ENCODE measurements at regions of chr16 and their contacts with region 1.

Region 1: DNA sequence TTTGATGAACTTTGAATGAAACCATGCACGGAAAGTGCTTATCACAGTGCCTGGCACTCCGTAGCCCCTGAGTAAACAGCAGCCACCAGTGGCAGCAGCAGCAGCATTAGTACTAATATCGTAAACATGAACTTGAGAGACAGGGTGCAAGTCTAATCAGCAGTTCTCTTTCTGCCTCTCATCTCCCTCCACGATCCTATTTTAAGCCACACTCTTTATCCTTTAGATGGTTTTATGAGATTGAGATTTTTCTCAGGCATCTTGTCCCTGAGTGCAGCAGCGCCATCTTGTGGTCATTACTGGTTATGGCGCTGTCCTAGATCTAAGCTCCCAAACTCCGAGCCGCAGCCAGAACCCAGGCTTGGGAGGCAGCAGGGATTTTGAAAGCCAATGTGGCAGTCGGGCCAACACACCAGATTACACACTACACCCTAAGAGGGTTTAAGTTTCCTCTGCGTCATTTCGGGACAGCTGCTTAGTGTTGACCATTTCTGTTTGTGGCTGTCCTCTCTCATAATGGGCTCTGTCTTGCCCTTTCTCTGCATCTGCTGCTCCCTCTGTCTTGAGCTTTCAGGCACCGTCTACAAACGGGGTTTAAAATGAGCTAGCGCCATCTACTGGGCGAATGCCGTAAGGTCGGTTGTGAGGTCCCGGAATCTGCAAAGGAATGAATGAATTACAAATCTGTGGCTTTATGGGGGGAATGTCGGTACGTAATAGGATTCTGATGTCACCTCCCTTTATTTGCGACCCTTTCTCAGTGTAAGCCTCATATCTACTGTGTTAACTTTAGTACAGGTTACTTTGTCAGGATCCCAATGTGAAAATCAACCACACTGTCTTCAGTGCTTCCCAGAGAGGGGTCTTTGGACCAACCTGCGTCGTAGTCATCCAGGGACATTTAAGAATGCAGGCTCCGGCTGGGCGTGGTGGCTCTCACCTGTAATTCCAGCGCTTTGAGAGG is 64.5 kb downstream of the CYLD start:
- DNase-seq: peak; percentile 90
- H3K4me3 ChIP-seq: peak overlapping the region in 3 of 4 donors; percentile 33 to 41 (median 40)
- H3K27ac ChIP-seq: peak overlapping the region; percentile 73 to 80 (median 76)
- H3K4me1 ChIP-seq: peaks cover 0 to 18% (median 7%) of the 10 kb centered on the region in 4 donors
- H3K27me3 ChIP-seq: no peaks in the 10 kb centered on the region
- CTCF ChIP-seq: peak; percentile 83 to 96 (median 92)
- EP300 ChIP-seq: no peak
- POLR2A ChIP-seq: no peak

Region 2: DNA sequence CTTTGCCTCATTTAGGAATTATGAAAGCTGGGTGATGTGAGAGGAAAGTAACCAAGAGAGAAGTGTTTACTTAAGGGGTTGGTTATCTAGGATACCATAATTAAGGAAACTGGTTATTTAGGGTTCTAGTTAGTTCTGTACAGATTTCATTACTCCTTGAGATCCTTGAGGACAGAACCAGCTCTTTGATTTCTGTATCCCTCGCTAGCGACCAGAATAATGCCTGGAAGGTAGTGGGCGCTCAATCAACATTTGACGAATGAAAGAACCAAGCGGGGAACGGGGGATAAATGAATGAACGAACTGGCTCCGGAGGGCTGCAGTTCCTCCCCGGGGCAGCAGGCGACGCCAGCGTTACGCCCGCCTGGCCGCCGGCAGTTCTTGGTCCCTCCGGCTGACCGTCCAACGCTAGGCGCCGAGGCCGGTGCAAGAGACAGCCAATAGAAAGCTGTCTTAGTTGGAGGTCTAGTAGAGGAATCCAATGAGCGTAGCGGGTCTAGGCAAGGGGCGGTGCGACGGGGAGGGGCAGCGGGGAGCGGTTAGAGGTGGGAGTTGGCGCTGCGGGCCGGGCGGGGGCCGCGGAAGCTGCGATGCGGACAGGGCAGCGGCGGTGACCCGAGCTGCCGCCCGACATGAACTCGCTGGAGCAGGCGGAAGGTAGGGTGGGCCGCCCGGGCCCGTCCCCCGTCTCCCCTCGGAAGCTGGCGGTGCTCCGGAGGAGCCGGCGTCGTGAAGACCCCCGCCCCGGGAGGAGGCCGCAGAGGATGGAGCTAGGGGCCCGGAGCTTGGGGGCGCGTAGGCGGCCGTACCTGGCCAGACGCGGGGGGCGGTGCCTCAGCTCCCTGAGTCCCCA is 781.5 kb before region 1 on chr16 and contains the start of gene CNEP1R1:
- intact Hi-C with region 1: loop called (anchors 5 kb)
- DNase-seq: peak; percentile 98
- H3K4me3 ChIP-seq: peak within 1 kb of the TSS; percentile 89 to 100 (median 100)
- H3K27ac ChIP-seq: peak within 1 kb of the TSS; percentile 84 to 91 (median 88)
- H3K4me1 ChIP-seq: peaks cover 0 to 35% (median 21%) of the 10 kb centered on the region in 4 donors
- H3K27me3 ChIP-seq: no peaks in the 10 kb centered on the region
- CTCF ChIP-seq: peak; percentile 99 to 100 (median 100)
- EP300 ChIP-seq: peak in 1 of 4 donors; percentile 44
- POLR2A ChIP-seq: peak; percentile 38 to 53
- total RNA-seq, gene CNEP1R1: 10.2 to 18.9 (median 14.1) TPM

Region 3: DNA sequence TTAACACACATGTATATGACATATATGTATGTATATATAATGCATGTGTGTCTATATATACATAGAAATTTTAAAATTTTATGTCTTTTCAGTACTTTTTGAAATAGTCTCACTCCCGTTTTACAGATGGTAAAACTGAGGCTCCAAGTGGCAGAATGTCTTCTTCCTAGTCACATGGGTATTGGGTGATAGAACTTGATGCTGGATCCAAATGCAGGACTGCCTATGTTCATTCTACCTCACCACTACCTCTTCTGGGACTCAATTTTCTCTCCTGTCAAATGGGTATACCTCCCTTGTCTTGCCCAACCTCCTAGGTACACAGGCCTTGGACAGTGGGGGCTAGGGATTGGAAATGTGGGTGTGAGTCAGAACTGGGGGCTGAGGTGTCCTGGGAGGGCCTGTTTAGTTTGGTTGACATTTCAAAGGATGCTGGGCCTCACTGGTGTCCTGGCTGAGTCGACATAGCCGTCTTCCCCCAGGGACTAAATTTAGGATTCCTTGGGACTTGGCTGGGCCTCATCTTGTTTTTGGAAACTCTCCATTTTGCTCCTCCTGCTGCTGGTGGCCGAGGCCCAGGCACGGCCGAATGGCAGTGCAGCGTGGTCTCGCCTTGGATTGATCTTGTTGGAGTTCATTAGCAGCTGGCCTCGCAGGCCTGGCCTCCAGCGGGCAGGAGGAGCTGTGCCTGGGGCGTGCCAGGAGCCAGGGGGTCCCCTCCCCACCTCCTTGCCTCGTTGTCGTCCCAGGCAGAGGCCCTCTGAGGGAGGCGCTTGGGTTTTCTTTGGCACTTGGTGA is 232.2 kb before region 1 on chr16:
- intact Hi-C with region 1: loop called (anchors 10 kb)
- DNase-seq: no peak
- H3K4me3 ChIP-seq: no peak overlapping the region
- H3K27ac ChIP-seq: peak overlapping the region; percentile 85 to 93 (median 88)
- H3K4me1 ChIP-seq: peaks cover 0 to 43% (median 38%) of the 10 kb centered on the region in 4 donors
- H3K27me3 ChIP-seq: no peaks in the 10 kb centered on the region
- CTCF ChIP-seq: no peak
- EP300 ChIP-seq: no peak
- POLR2A ChIP-seq: no peak

Region 4: GRCh38 chr16:50644729-50645128 is 161.7 kb before region 1 on chr16:
- intact Hi-C with region 1: no loop called
- DNase-seq: no peak
- H3K4me3 ChIP-seq: no peak overlapping the region
- H3K27ac ChIP-seq: no peak overlapping the region
- H3K4me1 ChIP-seq: peaks cover 0 to 18% (median 6%) of the 10 kb centered on the region in 4 donors
- H3K27me3 ChIP-seq: no peaks in the 10 kb centered on the region
- CTCF ChIP-seq: peak in 3 of 4 experiments; percentile 30 to 43 (median 40)
- EP300 ChIP-seq: no peak
- POLR2A ChIP-seq: no peak

Region 5: GRCh38 chr16:50665128-50665878 is 141.1 kb before region 1 on chr16:
- intact Hi-C with region 1: loop called (anchors 10 kb)
- DNase-seq: peak; percentile 86
- H3K4me3 ChIP-seq: peak overlapping the region; percentile 38 to 54 (median 52)
- H3K27ac ChIP-seq: peak overlapping the region; percentile 68 to 76 (median 73)
- H3K4me1 ChIP-seq: peaks cover 0 to 13% (median 7%) of the 10 kb centered on the region in 4 donors
- H3K27me3 ChIP-seq: no peaks in the 10 kb centered on the region
- CTCF ChIP-seq: peak; percentile 79 to 82 (median 80)
- EP300 ChIP-seq: no peak
- POLR2A ChIP-seq: no peak

Region 6: DNA sequence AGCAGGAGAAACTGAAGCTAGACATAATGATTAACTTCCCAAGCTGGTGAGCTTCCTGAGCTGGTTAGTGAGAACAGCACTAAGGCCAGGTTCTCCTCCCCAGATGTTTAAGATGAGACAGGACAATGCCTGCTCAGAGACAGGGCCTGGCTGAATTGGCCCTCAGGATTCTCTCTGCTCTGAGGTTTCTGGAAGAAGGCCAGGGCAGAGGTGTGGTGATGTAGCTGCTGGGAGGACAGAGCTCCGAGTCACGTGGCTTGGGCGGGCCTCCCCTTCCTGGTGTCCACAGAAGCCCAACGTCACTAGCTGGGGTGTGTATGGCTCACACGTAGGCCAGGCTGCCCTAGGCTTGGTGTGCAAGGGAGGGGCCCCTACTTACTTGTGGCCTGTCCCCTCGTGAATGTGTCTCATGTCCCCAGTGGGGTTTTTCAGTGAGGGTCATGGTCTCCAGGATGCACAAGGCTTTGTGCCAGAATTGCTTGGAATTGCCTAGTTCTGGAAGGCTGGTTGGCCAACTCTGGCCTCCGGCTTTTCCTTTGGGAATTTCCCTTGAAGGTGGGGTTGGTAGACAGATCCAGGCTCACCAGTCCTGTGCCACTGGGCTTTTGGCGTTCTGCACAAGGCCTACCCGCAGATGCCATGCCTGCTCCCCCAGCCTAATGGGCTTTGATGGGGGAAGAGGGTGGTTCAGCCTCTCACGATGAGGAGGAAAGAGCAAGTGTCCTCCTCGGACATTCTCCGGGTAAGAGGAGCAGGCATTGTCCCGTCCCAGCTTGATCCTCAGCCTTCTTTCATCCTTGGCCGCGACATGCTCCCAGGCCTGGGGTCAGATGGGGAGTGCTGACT is 109.6 kb before region 1 on chr16:
- intact Hi-C with region 1: loop called (anchors 10 kb)
- DNase-seq: peak; percentile 91
- H3K4me3 ChIP-seq: no peak overlapping the region
- H3K27ac ChIP-seq: peak overlapping the region; percentile 48 to 77 (median 64)
- H3K4me1 ChIP-seq: peaks cover 0 to 36% (median 29%) of the 10 kb centered on the region in 4 donors
- H3K27me3 ChIP-seq: peaks cover 0 to 4% (median 0%) of the 10 kb centered on the region in 3 donors
- CTCF ChIP-seq: no peak
- EP300 ChIP-seq: no peak
- POLR2A ChIP-seq: no peak

Region 7: DNA sequence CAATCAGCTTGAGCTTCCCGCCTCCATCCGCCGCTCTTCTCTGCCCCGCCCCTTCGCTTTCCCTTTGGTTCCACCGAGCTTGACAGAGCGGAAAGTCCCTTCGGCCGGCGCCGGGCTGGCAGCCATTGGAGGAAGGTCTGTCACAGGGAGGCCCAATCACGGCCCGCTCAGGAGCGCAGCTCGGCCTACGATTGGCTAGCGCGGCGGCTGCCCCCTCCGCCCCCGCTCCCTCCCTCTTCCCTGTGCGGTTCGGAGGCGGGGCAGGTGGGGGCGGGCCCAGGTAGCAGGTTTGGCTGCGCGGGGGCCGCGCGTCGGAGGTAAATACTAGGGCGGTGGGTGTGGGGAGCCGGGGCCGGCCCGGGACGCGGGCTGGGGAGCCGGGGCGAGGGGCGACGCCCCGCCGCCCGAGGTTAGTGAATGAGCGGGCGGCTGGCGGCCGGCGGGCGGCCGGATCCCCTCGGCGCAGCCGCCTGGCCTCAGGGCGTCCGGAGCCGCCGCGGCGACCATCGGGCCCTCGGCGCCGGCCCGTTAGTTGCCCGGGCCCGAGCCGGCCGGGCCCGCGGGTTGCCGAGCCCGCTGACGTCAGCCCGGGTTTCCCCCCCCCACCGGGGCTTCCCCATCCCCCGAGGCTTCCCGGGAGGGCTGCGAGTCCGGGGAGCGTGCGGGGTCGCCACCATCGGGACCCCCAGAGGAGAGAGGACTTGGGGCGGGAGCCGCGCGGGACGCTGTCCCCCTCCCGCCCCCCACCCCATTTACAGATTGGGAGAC is 64.4 kb before region 1 on chr16 and contains the start of gene CYLD:
- intact Hi-C with region 1: loop called (anchors 2 kb)
- DNase-seq: peak; percentile 100
- H3K4me3 ChIP-seq: peak within 1 kb of the TSS; percentile 68 to 99 (median 95)
- H3K27ac ChIP-seq: peak within 1 kb of the TSS; percentile 88 to 95 (median 92)
- H3K4me1 ChIP-seq: peaks cover 0 to 42% (median 32%) of the 10 kb centered on the region in 4 donors
- H3K27me3 ChIP-seq: no peaks in the 10 kb centered on the region
- CTCF ChIP-seq: no peak
- EP300 ChIP-seq: no peak
- POLR2A ChIP-seq: peak in 1 of 2 donors; percentile 29
- total RNA-seq, gene CYLD: 29.6 to 45.3 (median 38.5) TPM

Region 8: GRCh38 chr16:50781043-50781442 is 25.3 kb before region 1 on chr16:
- intact Hi-C with region 1: no loop called
- DNase-seq: no peak
- H3K4me3 ChIP-seq: no peak overlapping the region
- H3K27ac ChIP-seq: no peak overlapping the region
- H3K4me1 ChIP-seq: no peaks in the 10 kb centered on the region
- H3K27me3 ChIP-seq: no peaks in the 10 kb centered on the region
- CTCF ChIP-seq: no peak
- EP300 ChIP-seq: no peak
- POLR2A ChIP-seq: no peak

Region 9: DNA sequence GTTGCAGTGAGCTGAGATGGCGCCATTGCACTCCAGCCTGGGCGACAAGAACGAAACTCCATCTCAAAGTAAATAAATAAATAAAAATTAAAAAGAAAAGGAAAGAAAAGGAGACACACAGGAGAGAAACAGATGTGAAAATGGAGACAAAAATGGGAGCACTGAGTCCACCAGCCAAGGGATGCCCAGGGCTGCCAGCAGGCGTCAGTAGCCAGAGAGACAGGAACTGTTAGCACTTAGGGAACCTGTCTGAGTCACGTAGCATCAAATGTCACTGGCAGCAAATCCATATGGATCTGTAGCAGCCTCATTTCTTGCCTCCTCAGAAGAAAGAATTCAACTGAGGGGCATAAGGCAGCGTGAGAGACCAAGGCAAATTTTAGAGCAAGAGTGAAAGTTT is 15.2 kb after region 1 on chr16:
- intact Hi-C with region 1: no loop called
- DNase-seq: no peak
- H3K4me3 ChIP-seq: no peak overlapping the region
- H3K27ac ChIP-seq: no peak overlapping the region
- H3K4me1 ChIP-seq: no peaks in the 10 kb centered on the region
- H3K27me3 ChIP-seq: no peaks in the 10 kb centered on the region
- CTCF ChIP-seq: no peak
- EP300 ChIP-seq: no peak
- POLR2A ChIP-seq: no peak

Region 10: GRCh38 chr16:50932348-50932916 is 126.1 kb after region 1 on chr16:
- intact Hi-C with region 1: no loop called
- DNase-seq: no peak
- H3K4me3 ChIP-seq: no peak overlapping the region
- H3K27ac ChIP-seq: no peak overlapping the region
- H3K4me1 ChIP-seq: no peaks in the 10 kb centered on the region
- H3K27me3 ChIP-seq: peaks cover 0 to 10% (median 0%) of the 10 kb centered on the region in 3 donors
- CTCF ChIP-seq: no peak
- EP300 ChIP-seq: no peak
- POLR2A ChIP-seq: no peak